IMR-90 (cell line): ENCODE measurements at regions of chr17 and their contacts with region 1.

Region 1: DNA sequence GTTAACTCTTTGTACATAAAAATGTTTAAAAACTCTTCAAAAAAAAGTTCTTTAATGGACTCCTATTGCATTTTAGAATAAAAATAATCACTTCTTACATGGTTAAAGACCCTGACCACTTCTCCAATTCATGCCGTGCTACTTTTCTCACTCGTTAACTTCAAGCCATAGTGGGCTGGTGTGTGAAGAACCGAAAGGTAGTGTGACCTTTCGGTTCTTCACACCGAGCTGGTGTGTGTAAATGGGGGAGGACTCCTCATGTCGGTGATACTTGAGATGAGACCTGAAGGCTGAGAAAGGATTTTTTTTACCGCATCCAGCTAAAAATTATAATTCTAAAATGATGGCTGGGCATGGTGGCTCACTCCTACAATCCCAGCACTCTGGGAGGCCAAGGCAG is 22.1 kb downstream of the RFFL start:
- DNase-seq: no peak
- ATAC-seq: no peak
- H3K4me3 ChIP-seq: no peak overlapping the region
- H3K27ac ChIP-seq: no peak overlapping the region
- H3K4me1 ChIP-seq: no peaks in the 10 kb centered on the region
- H3K27me3 ChIP-seq: no peaks in the 10 kb centered on the region
- CTCF ChIP-seq: no peak
- POLR2A ChIP-seq: no peak
- RAD21 ChIP-seq: no peak

Region 2: GRCh38 chr17:34675605-34676004 is 365.8 kb before region 1 on chr17:
- CTCF ChIA-PET with region 1: no interaction called
- POLR2A ChIA-PET with region 1: no interaction called
- dilution Hi-C with region 1: no loop called
- in situ Hi-C with region 1: no loop called
- intact Hi-C with region 1: loop called (anchors 5 kb)
- DNase-seq: no peak
- ATAC-seq: no peak
- H3K4me3 ChIP-seq: no peak overlapping the region
- H3K27ac ChIP-seq: no peak overlapping the region
- H3K4me1 ChIP-seq: no peaks in the 10 kb centered on the region
- H3K27me3 ChIP-seq: no peaks in the 10 kb centered on the region
- CTCF ChIP-seq: no peak
- POLR2A ChIP-seq: no peak
- RAD21 ChIP-seq: no peak

Region 3: GRCh38 chr17:35079551-35080423 is 38.4 kb after region 1 on chr17:
- CTCF ChIA-PET with region 1: no interaction called
- POLR2A ChIA-PET with region 1: no interaction called
- dilution Hi-C with region 1: no loop called
- in situ Hi-C with region 1: no loop called
- intact Hi-C with region 1: loop called (anchors 5 kb)
- DNase-seq: peak; percentile 51
- ATAC-seq: no peak
- H3K4me3 ChIP-seq: no peak overlapping the region
- H3K27ac ChIP-seq: no peak overlapping the region
- H3K4me1 ChIP-seq: peaks cover 10% of the 10 kb centered on the region
- H3K27me3 ChIP-seq: no peaks in the 10 kb centered on the region
- CTCF ChIP-seq: no peak
- POLR2A ChIP-seq: no peak
- RAD21 ChIP-seq: no peak